ENCODE measurements at regions of chr12 and their contacts with region 1.

Region 1: DNA sequence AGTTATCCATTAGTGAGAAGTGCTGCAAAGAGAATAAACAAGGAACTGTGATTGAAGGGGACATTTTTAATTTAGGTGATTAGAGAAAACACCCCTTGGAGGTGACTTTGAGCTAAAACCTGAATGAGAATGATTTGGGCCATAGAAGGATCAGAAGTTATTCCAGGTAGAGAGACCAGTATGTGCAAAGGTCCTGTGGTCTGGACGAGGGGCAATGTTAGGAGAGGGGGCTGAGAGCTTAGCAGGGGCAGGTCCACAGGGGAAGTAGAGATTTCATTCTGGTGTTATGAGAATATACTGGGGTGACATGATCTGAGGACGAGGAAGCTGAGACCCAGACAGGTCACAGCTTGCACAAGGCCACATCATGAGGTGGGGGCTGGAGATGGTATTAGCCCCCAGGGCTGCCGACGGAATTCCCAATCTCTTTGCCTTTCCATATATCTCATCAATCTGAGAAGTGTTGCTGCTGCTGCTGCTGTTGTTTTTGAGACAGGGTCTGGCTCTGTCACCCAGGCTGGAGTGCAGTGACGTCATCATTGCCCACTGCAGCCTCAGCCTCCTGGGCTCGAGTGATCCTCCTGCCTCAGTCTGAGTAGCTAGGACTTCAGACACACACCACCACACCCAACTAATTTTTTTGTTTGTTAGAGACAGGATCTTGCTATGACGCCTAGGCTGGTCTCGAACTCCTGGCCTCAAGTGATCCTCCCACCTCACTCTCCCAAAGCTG is 55.6 kb downstream of the KCTD10 start:
- DNase-seq: no peak
- ATAC-seq: no peak
- H3K4me3 Mint-ChIP-seq: no peak overlapping the region
- H3K27ac Mint-ChIP-seq: no peak overlapping the region
- H3K4me1 Mint-ChIP-seq: no peaks in the 10 kb centered on the region
- H3K27me3 Mint-ChIP-seq: peaks cover 17% of the 10 kb centered on the region
- CTCF ChIP-seq: no peak

Region 2: GRCh38 chr12:109393437-109394345 is 27.8 kb before region 1 on chr12:
- CTCF ChIA-PET with region 1: interaction called, 10 read pairs
- POLR2A ChIA-PET with region 1: no interaction called
- intact Hi-C with region 1: no loop called
- DNase-seq: peak; percentile 51
- ATAC-seq: peak; percentile 83
- H3K4me3 Mint-ChIP-seq: no peak overlapping the region
- H3K27ac Mint-ChIP-seq: no peak overlapping the region
- H3K4me1 Mint-ChIP-seq: no peaks in the 10 kb centered on the region
- H3K27me3 Mint-ChIP-seq: peaks cover 22% of the 10 kb centered on the region
- CTCF ChIP-seq: peak; percentile 88